ENCODE measurements at regions of chr9 and their contacts with region 1.

Region 1: GRCh38 chr9:120842690-120843499 is at the start of gene PSMD5:
- DNase-seq: peak; percentile 88 to 99 (median 95)
- ATAC-seq: peak; percentile 88
- H3K4me3 ChIP-seq: peak within 1 kb of the TSS; percentile 92 to 97
- H3K4me3 Mint-ChIP-seq: peak within 1 kb of the TSS; percentile 94
- H3K27ac ChIP-seq: peak within 1 kb of the TSS; percentile 94 to 98
- H3K27ac Mint-ChIP-seq: peak within 1 kb of the TSS; percentile 98
- H3K4me1 ChIP-seq: peaks cover 65% of the 10 kb centered on the region
- H3K4me1 Mint-ChIP-seq: peaks cover 78% of the 10 kb centered on the region
- H3K27me3 ChIP-seq: no peaks in the 10 kb centered on the region
- H3K27me3 Mint-ChIP-seq: no peaks in the 10 kb centered on the region
- CTCF ChIP-seq: no peak
- total RNA-seq, gene PSMD5: 38.5 to 58.2 TPM

Region 2: DNA sequence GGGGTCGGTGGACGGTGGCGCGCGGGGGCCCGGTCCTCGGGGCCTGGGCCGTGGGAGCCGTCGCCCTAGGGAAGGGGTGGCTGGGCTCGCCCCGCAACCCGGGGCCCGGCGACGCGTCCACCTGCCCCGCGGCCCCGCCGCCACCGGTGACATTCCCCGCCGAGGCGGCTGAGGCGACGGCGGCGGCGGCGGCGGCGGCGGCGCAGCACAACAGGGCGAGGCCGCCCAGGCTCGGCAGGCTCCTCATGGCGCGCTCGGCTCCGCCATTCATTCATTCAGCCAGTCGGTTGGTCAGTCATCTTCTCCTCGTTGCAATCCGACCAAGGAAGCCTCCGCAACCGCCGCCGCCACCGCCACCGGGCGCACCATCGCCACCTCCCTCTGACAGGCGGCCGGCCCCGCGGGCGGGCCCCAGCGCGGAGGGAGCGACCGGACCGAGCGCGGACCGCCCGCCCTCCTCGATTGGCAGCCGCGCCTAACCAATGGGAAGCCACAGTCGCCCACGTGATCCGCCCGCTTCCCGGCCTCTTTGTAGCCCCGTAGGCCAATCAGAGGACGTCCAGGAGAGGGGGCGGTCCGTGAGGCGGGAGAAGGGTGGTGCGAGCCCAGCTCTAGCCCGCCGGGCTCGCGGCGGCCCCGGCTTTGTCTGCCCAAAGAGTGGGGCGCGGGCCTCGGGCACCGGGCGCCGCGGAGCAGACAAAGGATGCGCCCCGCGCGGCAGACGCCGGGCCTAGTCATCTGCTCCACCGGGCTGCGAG is 128.6 kb before region 1 on chr9 and contains the start of gene MEGF9:
- CTCF ChIA-PET with region 1: no interaction called
- POLR2A ChIA-PET with region 1: interaction called, 3 read pairs
- intact Hi-C with region 1: loop called (anchors 1 kb)
- DNase-seq: peak; percentile 89 to 98 (median 96)
- ATAC-seq: peak; percentile 94
- H3K4me3 ChIP-seq: peak within 1 kb of the TSS; percentile 69 to 92
- H3K4me3 Mint-ChIP-seq: peak within 1 kb of the TSS; percentile 83
- H3K27ac ChIP-seq: peak within 1 kb of the TSS; percentile 61 to 64
- H3K27ac Mint-ChIP-seq: peak within 1 kb of the TSS; percentile 86
- H3K4me1 ChIP-seq: peaks cover 38% of the 10 kb centered on the region
- H3K4me1 Mint-ChIP-seq: peaks cover 35% of the 10 kb centered on the region
- H3K27me3 ChIP-seq: no peaks in the 10 kb centered on the region
- H3K27me3 Mint-ChIP-seq: no peaks in the 10 kb centered on the region
- CTCF ChIP-seq: no peak
- total RNA-seq, gene MEGF9: 3.0 to 3.1 TPM

Region 3: GRCh38 chr9:120856700-120857099 is 13.8 kb after region 1 on chr9:
- CTCF ChIA-PET with region 1: interaction called, 3 read pairs
- POLR2A ChIA-PET with region 1: interaction called, 14 read pairs
- intact Hi-C with region 1: no loop called
- DNase-seq: no peak
- ATAC-seq: no peak
- H3K4me3 ChIP-seq: no peak overlapping the region
- H3K4me3 Mint-ChIP-seq: no peak overlapping the region
- H3K27ac ChIP-seq: no peak overlapping the region
- H3K27ac Mint-ChIP-seq: peak overlapping the region; percentile 72
- H3K4me1 ChIP-seq: no peaks in the 10 kb centered on the region
- H3K4me1 Mint-ChIP-seq: peaks cover 22% of the 10 kb centered on the region
- H3K27me3 ChIP-seq: no peaks in the 10 kb centered on the region
- H3K27me3 Mint-ChIP-seq: no peaks in the 10 kb centered on the region
- CTCF ChIP-seq: no peak

Region 4: DNA sequence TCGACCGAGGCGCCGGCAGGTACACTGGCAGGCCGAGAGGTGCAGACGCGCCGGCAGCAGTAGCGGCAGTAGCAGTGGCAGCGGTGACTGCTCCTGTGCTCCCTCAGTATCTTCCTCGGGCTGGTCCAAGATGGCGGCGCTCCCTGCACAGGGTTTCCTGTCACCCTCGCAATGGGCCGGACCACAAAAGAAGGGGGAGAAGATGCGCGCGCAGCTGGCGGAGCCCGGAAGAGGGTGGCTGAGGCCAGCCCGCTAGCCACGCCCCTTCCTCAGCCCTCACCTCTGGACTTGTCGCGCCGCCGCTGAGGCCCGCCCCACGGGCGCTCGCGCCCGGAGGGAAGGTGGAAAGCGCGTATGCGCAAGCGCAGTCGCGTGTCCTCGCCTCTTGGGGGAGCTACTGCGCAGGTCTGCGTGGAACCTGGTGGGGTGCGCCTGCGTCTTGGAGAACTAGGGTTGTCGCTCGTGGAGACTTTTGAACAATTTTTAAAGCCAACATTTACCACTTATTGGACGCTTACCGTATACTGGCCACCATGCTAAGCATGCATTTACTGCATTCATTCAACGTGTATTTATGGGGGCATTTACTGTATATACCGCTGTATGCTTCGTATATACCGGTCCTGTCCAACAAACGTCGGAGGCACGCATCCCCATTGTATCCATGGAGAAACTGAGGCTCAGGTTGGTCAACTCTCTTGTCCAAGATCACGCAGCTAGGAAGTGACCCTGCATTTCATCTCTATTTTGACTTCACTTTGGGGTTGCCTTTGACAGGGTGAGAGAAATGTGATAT is 359.0 kb after region 1 on chr9 and contains the start of gene RAB14:
- CTCF ChIA-PET with region 1: no interaction called
- POLR2A ChIA-PET with region 1: interaction called, 4 read pairs
- intact Hi-C with region 1: loop called (anchors 2 to 5 kb)
- DNase-seq: peak; percentile 100
- ATAC-seq: peak; percentile 90
- H3K4me3 ChIP-seq: peak within 1 kb of the TSS; percentile 77 to 79
- H3K4me3 Mint-ChIP-seq: peak within 1 kb of the TSS; percentile 96
- H3K27ac ChIP-seq: peak within 1 kb of the TSS; percentile 79 to 82
- H3K27ac Mint-ChIP-seq: peak within 1 kb of the TSS; percentile 97
- H3K4me1 ChIP-seq: peaks cover 41% of the 10 kb centered on the region
- H3K4me1 Mint-ChIP-seq: peaks cover 53% of the 10 kb centered on the region
- H3K27me3 ChIP-seq: no peaks in the 10 kb centered on the region
- H3K27me3 Mint-ChIP-seq: no peaks in the 10 kb centered on the region
- CTCF ChIP-seq: no peak
- total RNA-seq, gene RAB14: 58.8 to 60.4 TPM

Measured in CD8-positive, alpha-beta T cell (primary cell).